Activated CD8-positive, alpha-beta memory T cell treated with anti-CD3 and anti-CD28 coated beads, Interleukin-2, amount 10 ng/mL, durations not matched to agents 7 days and 5 days (primary cell): ENCODE measurements at regions of chr10 and their contacts with region 1.

Region 1: GRCh38 chr10:84537447-84537931 is 209.1 kb downstream of the CCSER2 start:
- DNase-seq: no peak
- ATAC-seq: peak; percentile 63
- H3K4me3 Mint-ChIP-seq: no peak overlapping the region
- H3K27ac Mint-ChIP-seq: no peak overlapping the region
- H3K4me1 Mint-ChIP-seq: peaks cover 15% of the 10 kb centered on the region
- H3K27me3 Mint-ChIP-seq: peaks cover 15% of the 10 kb centered on the region

Region 2: DNA sequence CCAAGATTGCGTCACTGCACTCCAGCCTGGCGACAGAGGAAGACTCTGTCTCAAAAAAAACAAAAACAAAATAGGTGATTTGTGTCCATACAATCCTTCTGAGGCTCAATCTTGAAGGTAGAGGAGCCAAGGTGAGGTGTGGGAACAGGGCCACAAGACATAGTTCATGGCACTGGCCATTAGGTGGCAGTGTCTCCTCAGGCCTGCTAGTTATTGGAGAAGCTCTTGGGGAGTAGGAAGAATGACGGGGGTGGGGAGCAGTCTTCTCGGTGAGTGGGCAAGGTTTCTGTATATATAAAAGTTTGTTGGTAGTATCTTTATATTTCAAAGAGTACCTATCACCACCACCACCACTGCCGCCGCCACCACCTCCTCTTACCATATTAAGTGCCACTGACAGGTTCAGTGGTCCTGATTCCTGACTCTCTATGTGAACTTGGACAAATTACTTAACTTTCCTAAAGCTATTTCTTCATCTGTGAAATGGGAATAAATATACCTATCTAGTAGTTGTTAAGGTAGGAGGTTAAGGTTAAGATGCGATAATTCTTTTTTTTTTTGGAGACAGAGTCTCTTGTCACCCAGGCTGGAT is 185.1 kb before region 1 on chr10:
- CTCF ChIA-PET with region 1: interaction called, 59 read pairs
- DNase-seq: peak; percentile 80
- ATAC-seq: peak; percentile 89
- H3K4me3 Mint-ChIP-seq: no peak overlapping the region
- H3K27ac Mint-ChIP-seq: no peak overlapping the region
- H3K4me1 Mint-ChIP-seq: peaks cover 49% of the 10 kb centered on the region
- H3K27me3 Mint-ChIP-seq: no peaks in the 10 kb centered on the region

Region 3: GRCh38 chr10:84375011-84375410 is 162.5 kb before region 1 on chr10:
- CTCF ChIA-PET with region 1: interaction called, 59 read pairs
- DNase-seq: no peak
- ATAC-seq: peak; percentile 45
- H3K4me3 Mint-ChIP-seq: no peak overlapping the region
- H3K27ac Mint-ChIP-seq: no peak overlapping the region
- H3K4me1 Mint-ChIP-seq: peaks cover 31% of the 10 kb centered on the region
- H3K27me3 Mint-ChIP-seq: no peaks in the 10 kb centered on the region

Region 4: GRCh38 chr10:84429926-84430520 is 107.5 kb before region 1 on chr10:
- CTCF ChIA-PET with region 1: interaction called, 48 read pairs
- DNase-seq: peak; percentile 75
- ATAC-seq: peak; percentile 82
- H3K4me3 Mint-ChIP-seq: no peak overlapping the region
- H3K27ac Mint-ChIP-seq: no peak overlapping the region
- H3K4me1 Mint-ChIP-seq: peaks cover 10% of the 10 kb centered on the region
- H3K27me3 Mint-ChIP-seq: no peaks in the 10 kb centered on the region

Region 5: GRCh38 chr10:84447701-84448400 is 89.6 kb before region 1 on chr10:
- CTCF ChIA-PET with region 1: no interaction called
- DNase-seq: no peak
- ATAC-seq: no peak
- H3K4me3 Mint-ChIP-seq: no peak overlapping the region
- H3K27ac Mint-ChIP-seq: no peak overlapping the region
- H3K4me1 Mint-ChIP-seq: no peaks in the 10 kb centered on the region
- H3K27me3 Mint-ChIP-seq: no peaks in the 10 kb centered on the region

Region 6: GRCh38 chr10:84590327-84591193 is 53.1 kb after region 1 on chr10:
- CTCF ChIA-PET with region 1: no interaction called
- DNase-seq: no peak
- ATAC-seq: no peak
- H3K4me3 Mint-ChIP-seq: no peak overlapping the region
- H3K27ac Mint-ChIP-seq: no peak overlapping the region
- H3K4me1 Mint-ChIP-seq: no peaks in the 10 kb centered on the region
- H3K27me3 Mint-ChIP-seq: no peaks in the 10 kb centered on the region

Region 7: GRCh38 chr10:84715911-84716310 is 178.4 kb after region 1 on chr10:
- CTCF ChIA-PET with region 1: interaction called, 10 read pairs
- DNase-seq: no peak
- ATAC-seq: no peak
- H3K4me3 Mint-ChIP-seq: no peak overlapping the region
- H3K27ac Mint-ChIP-seq: no peak overlapping the region
- H3K4me1 Mint-ChIP-seq: no peaks in the 10 kb centered on the region
- H3K27me3 Mint-ChIP-seq: peaks cover 5% of the 10 kb centered on the region